Caco-2 (cell line): ENCODE measurements at regions of chr13 and their contacts with region 1.

Region 1: DNA sequence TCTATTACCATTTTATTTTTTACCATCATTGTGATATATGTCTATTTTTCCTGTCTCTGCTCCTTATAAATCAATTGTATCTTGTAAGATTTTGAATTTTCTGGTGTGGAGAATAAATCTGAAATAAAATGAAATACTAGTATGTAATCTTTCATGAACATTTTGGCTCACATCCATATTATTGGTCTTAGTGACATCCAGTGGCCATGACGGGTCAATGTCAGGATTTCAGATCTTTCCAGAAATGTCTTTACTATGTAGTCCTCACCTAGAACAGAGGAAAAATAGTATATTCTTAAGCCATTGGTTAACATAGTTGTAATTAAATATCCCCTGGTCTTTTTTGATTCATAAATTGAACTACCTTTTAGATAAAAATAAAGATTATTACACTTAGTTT is 109.8 kb upstream of the GPC6 start:
- DNase-seq: peak in 1 of 2 experiments; percentile 6
- H3K4me3 ChIP-seq: no peak overlapping the region
- H3K4me3 Mint-ChIP-seq: no peak overlapping the region
- H3K27ac Mint-ChIP-seq: no peak overlapping the region
- H3K4me1 ChIP-seq: no peaks in the 10 kb centered on the region
- H3K4me1 Mint-ChIP-seq: no peaks in the 10 kb centered on the region
- H3K27me3 ChIP-seq: no peaks in the 10 kb centered on the region
- H3K27me3 Mint-ChIP-seq: peaks cover 13% of the 10 kb centered on the region
- CTCF ChIP-seq: peak in 1 of 2 experiments; percentile 37

Region 2: GRCh38 chr13:92187378-92187989 is 929.3 kb before region 1 on chr13:
- CTCF ChIA-PET with region 1: no interaction called
- POLR2A ChIA-PET with region 1: no interaction called
- intact Hi-C with region 1: loop called (anchors 5 kb)
- DNase-seq: peak in 1 of 2 experiments; percentile 63
- H3K4me3 ChIP-seq: no peak overlapping the region
- H3K4me3 Mint-ChIP-seq: no peak overlapping the region
- H3K27ac Mint-ChIP-seq: no peak overlapping the region
- H3K4me1 ChIP-seq: no peaks in the 10 kb centered on the region
- H3K4me1 Mint-ChIP-seq: no peaks in the 10 kb centered on the region
- H3K27me3 ChIP-seq: no peaks in the 10 kb centered on the region
- H3K27me3 Mint-ChIP-seq: no peaks in the 10 kb centered on the region
- CTCF ChIP-seq: peak; percentile 80 to 82

Region 3: GRCh38 chr13:92896842-92897241 is 220.0 kb before region 1 on chr13:
- CTCF ChIA-PET with region 1: no interaction called
- POLR2A ChIA-PET with region 1: no interaction called
- intact Hi-C with region 1: loop called (anchors 2 kb)
- DNase-seq: peak in 1 of 2 experiments; percentile 22
- H3K4me3 ChIP-seq: no peak overlapping the region
- H3K4me3 Mint-ChIP-seq: no peak overlapping the region
- H3K27ac Mint-ChIP-seq: no peak overlapping the region
- H3K4me1 ChIP-seq: no peaks in the 10 kb centered on the region
- H3K4me1 Mint-ChIP-seq: no peaks in the 10 kb centered on the region
- H3K27me3 ChIP-seq: no peaks in the 10 kb centered on the region
- H3K27me3 Mint-ChIP-seq: peaks cover 3% of the 10 kb centered on the region
- CTCF ChIP-seq: peak; percentile 32 to 49

Region 4: DNA sequence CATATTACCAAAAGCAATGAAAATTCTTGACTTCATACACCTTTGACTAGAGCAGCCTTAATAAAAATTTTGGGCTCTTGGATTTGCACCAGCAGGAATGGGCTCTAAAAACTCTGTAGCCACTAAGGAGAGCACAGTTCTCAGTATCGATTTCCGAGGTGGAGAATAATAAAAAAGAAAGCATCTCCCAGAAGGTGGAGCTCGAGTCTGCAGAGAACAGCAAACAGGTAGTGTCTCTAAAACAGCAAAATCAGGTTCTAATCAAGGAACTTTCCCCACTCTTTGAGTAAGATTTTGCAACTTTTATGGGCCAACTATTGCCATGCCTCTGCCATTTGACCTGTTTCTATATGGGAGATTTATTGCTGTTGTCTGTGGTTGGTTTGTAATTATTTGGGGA is 148.9 kb before region 1 on chr13:
- CTCF ChIA-PET with region 1: no interaction called
- POLR2A ChIA-PET with region 1: no interaction called
- intact Hi-C with region 1: loop called (anchors 1 kb)
- DNase-seq: peak in 1 of 2 experiments; percentile 11
- H3K4me3 ChIP-seq: no peak overlapping the region
- H3K4me3 Mint-ChIP-seq: no peak overlapping the region
- H3K27ac Mint-ChIP-seq: no peak overlapping the region
- H3K4me1 ChIP-seq: no peaks in the 10 kb centered on the region
- H3K4me1 Mint-ChIP-seq: no peaks in the 10 kb centered on the region
- H3K27me3 ChIP-seq: no peaks in the 10 kb centered on the region
- H3K27me3 Mint-ChIP-seq: no peaks in the 10 kb centered on the region
- CTCF ChIP-seq: peak; percentile 17 to 46